GM13977 (cell line): ENCODE measurements at regions of chr18 and their contacts with region 1.

Region 1: GRCh38 chr18:63848159-63848558 is 39.3 kb upstream of the SERPINB2 start:
- DNase-seq: no peak
- CTCF ChIP-seq: peak; percentile 54

Region 2: DNA sequence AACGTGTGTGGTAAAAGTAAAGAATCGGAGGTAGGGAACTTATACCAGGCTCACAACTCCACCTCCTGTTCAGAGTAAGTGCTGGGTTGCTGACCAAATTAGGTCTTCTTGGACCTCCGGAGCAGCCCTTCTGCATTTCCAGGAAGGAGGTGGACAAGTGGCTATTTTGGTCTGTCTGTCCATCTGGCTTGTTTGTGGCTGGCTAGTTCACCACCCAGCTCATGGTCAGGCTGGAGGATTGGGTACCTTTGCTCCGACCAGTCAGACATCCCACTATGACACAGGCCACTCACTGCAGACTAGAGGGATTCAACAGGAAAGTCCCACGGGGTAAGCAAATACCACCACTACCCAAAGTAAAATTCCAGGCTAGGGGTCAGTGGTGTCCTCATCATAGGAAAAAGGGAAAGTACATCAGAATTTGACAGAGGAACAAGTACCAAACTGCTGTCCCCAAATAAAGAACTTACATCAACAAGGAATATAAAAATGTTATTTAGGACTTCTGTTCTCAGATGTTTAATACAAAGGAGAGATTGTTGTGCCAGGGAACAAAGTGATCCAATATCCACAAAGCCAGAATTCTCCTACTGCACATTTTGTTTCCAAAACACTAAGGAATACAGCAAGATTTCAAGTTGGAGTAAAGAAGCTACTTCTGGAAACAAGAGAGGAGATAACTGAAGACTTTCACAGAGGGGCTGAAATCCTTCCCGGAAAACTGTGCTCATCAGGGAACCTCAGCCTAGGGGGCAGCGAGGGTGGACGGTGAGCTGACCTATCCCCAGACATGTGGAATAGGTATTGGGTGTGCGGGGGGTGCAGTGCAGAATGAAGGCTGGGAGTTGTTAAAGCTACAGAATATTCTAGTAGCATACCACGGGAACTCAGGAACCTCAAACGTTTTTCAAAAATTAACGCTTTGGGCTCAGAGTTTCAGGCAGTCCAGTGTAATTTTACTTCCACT is 585.5 kb before region 1 on chr18:
- in situ Hi-C with region 1: no loop called
- DNase-seq: no peak
- CTCF ChIP-seq: no peak

Region 3: DNA sequence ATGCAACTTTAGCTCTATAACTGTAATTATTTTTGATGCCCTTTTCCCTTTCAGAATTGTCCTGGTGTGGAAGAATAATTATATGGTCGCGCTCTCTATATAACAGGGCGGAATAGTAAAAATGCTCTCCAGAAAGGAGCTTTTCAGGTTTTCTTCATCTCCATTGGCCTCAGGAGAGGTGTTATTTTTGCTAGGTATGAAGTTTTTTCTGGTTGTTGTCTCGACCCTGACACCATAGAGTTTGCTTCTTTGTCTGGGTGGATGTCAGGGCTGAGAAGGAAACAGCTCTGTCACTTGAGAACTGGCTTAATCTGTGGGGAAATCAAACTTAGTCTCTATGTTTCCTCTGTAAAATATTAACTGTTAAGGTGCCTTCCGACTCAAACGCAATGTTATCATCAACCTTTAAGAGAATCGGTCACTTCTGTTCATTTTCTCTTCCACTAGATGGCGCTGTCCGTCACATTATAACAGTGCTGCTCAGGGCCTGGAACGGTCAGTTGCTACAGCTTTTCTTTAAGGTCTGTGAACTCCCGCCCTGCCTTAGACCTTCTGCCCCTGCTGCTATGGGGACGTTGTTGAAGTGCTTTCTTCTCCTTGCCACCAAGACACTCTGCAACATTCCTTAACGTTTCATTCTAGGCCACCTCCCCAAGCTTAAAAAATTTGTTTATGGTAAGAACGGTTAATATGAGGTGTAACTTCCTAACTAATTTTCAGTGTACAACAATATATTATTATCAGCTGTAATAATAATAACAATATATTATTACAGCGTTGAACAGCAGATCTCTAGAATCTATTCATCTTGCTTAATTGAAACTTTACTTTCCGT is 329.8 kb before region 1 on chr18:
- in situ Hi-C with region 1: loop called (anchors 10 kb)
- DNase-seq: peak; percentile 44
- CTCF ChIP-seq: peak; percentile 77

Region 4: DNA sequence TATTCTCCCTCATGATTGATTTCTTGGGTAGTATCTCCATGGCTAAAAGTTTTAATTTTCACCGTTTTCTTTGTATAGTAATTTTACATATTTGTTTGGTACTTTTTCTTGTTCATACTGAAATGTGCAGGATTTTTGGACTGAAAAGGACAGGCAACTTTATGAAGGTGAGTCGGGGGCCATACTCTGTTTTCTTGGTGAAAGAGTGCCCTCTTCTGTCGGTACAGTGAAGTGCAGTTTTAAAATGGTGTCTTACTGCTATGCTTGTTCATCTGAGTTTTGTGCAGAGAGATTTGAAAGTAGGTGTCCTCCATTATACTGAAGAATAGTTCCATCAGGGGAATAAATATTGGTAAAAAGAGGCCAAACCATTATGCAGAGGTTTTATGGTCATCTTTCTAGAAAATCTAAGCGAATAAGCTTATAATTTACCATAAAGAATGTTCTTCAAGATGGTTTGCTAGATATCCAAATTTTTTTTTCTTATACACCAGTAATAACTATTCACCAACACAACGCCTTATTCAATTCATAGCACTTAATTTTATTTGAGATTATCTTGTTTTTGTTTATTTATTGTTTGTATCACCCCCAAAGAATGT is 269.7 kb before region 1 on chr18:
- in situ Hi-C with region 1: loop called (anchors 25 kb)
- DNase-seq: peak; percentile 28
- CTCF ChIP-seq: peak; percentile 79